KBM-7 (cell line): ENCODE measurements at regions of chr12 and their contacts with region 1.

Region 1: GRCh38 chr12:107610021-107610859 is 75.4 kb upstream of the PWP1 start:
- DNase-seq: peak; percentile 42

Region 2: GRCh38 chr12:107131832-107132616 is 478.2 kb before region 1 on chr12:
- in situ Hi-C with region 1: loop called (anchors 10 kb)
- DNase-seq: peak; percentile 58